ENCODE measurements at regions of chr6 and their contacts with region 1.

Region 1: DNA sequence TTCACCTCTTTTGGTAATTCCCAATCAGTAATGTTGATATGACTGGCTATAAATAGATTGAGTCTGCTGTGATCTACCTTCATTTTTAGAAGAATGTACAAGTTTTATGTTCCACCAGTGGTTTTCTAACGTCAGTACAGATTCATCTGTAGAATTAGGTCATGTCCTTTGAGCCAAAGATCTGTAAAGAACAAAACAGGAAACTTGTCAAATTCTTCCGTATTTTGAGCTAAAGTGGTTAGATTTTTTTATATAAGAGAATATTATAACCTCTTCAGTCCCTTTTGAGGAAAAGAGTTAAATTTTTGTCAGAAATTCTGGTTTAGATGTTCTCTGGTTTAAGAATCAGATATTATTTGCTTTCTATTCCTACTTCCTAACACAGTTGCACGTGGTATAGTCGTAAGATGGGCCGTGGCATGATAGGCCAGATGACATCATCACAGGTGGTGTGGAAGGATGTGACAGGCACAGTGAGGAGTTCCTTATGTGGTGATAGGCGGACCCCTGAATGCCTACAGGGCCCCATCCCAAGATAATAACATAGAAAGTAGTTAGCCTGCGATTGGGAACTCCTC is 62.3 kb downstream of the SNX9 start:
- DNase-seq: peak in 33 of 35 experiments; percentile 21 to 89 (median 70)
- ATAC-seq: peak; percentile 83 to 87 (median 85)
- H3K4me3 ChIP-seq: no peak overlapping the region
- H3K4me3 Mint-ChIP-seq: peak overlapping the region in 2 of 3 donors; percentile 47 to 48
- H3K27ac ChIP-seq: peak overlapping the region; percentile 95
- H3K27ac Mint-ChIP-seq: peak overlapping the region; percentile 91
- H3K4me1 ChIP-seq: peaks cover 14 to 15% of the 10 kb centered on the region in 2 experiments
- H3K4me1 Mint-ChIP-seq: peaks cover 56 to 72% (median 63%) of the 10 kb centered on the region in 3 donors
- H3K27me3 ChIP-seq: no peaks in the 10 kb centered on the region
- H3K27me3 Mint-ChIP-seq: no peaks in the 10 kb centered on the region

Region 2: DNA sequence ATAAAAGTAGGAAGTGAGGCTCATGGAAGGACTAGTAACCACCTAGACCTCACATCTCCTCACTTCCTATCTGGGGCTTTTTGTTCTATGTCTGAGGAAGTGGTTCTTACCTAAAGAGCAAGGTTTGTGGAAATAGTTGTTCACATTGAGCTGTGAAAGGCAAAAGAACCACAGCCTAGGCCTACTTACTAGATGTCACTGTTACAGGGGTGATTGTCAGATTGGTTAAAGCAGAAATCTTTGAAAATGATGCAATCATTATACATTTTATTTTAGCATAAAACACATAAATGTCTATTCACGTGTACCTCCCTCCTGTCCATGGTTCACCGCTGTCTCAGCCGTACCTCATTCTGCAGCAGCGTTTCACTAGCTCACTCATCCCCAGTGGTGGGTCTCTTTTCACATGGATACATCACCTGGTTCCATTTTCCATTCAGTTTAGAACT is 830.7 kb before region 1 on chr6:
- CTCF ChIA-PET with region 1: no interaction called
- POLR2A ChIA-PET with region 1: no interaction called
- DNase-seq: peak in 29 of 35 experiments; percentile 2 to 76 (median 25)
- ATAC-seq: peak; percentile 87 to 98 (median 97)
- H3K4me3 ChIP-seq: no peak overlapping the region
- H3K4me3 Mint-ChIP-seq: peak overlapping the region in 1 of 3 donors; percentile 64
- H3K27ac ChIP-seq: peak overlapping the region; percentile 75
- H3K27ac Mint-ChIP-seq: peak overlapping the region; percentile 84 to 85
- H3K4me1 ChIP-seq: peaks cover 22 to 23% of the 10 kb centered on the region in 2 experiments
- H3K4me1 Mint-ChIP-seq: peaks cover 51 to 58% (median 55%) of the 10 kb centered on the region in 3 donors
- H3K27me3 ChIP-seq: no peaks in the 10 kb centered on the region
- H3K27me3 Mint-ChIP-seq: no peaks in the 10 kb centered on the region

Region 3: GRCh38 chr6:157756708-157757429 is 128.4 kb before region 1 on chr6:
- CTCF ChIA-PET with region 1: interaction called, 7 to 24 read pairs
- POLR2A ChIA-PET with region 1: no interaction called
- DNase-seq: peak; percentile 38 to 88 (median 74)
- ATAC-seq: peak; percentile 30 to 52 (median 44)
- H3K4me3 ChIP-seq: peak overlapping the region in 1 of 2 donors; percentile 2
- H3K4me3 Mint-ChIP-seq: peak overlapping the region in 2 of 3 donors; percentile 17 to 77
- H3K27ac ChIP-seq: no peak overlapping the region
- H3K27ac Mint-ChIP-seq: peak overlapping the region; percentile 69 to 84
- H3K4me1 ChIP-seq: peaks cover 22 to 51% of the 10 kb centered on the region in 2 experiments
- H3K4me1 Mint-ChIP-seq: peaks cover 74 to 78% (median 77%) of the 10 kb centered on the region in 3 donors
- H3K27me3 ChIP-seq: peaks cover 0 to 9% of the 10 kb centered on the region in 2 experiments
- H3K27me3 Mint-ChIP-seq: peaks cover 0 to 5% of the 10 kb centered on the region in 2 donors